Activated CD4-positive, alpha-beta T cell treated with anti-CD3 and anti-CD28 coated beads for 36 hours (primary cell): ENCODE measurements at regions of chr6 and their contacts with region 1.

Region 1: GRCh38 chr6:150079604-150080003 is 10.7 kb upstream of the ULBP3 start:
- DNase-seq: peak; percentile 18
- ATAC-seq: peak; percentile 70
- H3K4me3 Mint-ChIP-seq: no peak overlapping the region
- H3K27ac Mint-ChIP-seq: no peak overlapping the region
- H3K4me1 Mint-ChIP-seq: peaks cover 22% of the 10 kb centered on the region
- H3K27me3 Mint-ChIP-seq: peaks cover 22% of the 10 kb centered on the region

Region 2: GRCh38 chr6:150004783-150005717 is 74.6 kb before region 1 on chr6:
- CTCF ChIA-PET with region 1: no interaction called
- POLR2A ChIA-PET with region 1: no interaction called
- intact Hi-C with region 1: no loop called
- DNase-seq: peak; percentile 93
- ATAC-seq: peak; percentile 74
- H3K4me3 Mint-ChIP-seq: peak overlapping the region; percentile 75
- H3K27ac Mint-ChIP-seq: no peak overlapping the region
- H3K4me1 Mint-ChIP-seq: peaks cover 59% of the 10 kb centered on the region
- H3K27me3 Mint-ChIP-seq: peaks cover 30% of the 10 kb centered on the region

Region 3: DNA sequence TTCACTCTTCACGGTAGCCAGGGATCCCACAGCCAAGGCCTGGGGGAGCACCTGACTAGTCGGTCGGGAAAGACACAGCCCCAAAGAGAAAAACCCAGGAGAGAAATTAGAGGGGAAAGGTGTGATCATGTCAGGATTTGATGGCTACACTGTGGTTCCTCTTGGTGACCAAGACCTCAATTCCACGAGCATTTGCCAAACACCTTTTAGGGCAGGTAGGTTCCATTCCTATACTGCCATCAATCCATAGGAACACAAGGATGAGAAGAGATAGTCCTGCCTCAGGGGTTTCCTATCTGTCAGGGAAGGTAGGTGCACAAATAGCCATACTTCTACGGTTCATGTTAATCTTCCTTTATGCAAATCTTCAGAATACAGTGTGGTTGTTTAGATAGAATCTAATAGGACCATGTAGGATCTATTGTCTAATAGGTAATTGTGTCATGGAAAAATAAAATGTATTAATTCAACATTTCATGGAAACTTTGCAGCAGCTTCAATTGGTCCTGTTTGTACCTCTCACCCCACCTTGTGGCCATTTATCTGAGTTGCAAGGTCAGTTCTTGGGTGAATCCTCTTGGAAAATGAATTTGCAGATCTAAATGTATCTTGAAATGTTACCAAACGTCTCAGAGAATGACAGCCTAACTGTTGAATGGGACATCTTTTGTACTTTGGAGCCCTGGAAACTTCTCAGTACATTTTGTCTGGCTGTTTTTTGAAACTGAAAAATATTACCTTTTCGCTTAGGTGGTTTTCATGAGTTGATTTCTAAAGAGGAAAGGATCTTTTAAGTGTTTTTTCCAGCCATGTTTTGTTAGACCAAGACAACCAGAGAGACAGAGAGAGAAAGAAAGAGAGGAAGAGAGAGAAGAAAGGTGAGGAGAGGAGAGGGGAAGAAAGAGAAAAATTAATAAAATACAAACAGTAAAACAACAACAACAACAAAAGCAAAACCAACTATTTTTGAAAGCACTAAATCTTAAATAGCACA is 255.5 kb after region 1 on chr6:
- CTCF ChIA-PET with region 1: interaction called, 14 read pairs
- POLR2A ChIA-PET with region 1: no interaction called
- intact Hi-C with region 1: loop called (anchors 1 kb)
- DNase-seq: peak; percentile 61
- ATAC-seq: no peak
- H3K4me3 Mint-ChIP-seq: no peak overlapping the region
- H3K27ac Mint-ChIP-seq: no peak overlapping the region
- H3K4me1 Mint-ChIP-seq: no peaks in the 10 kb centered on the region
- H3K27me3 Mint-ChIP-seq: peaks cover 11% of the 10 kb centered on the region

Region 4: DNA sequence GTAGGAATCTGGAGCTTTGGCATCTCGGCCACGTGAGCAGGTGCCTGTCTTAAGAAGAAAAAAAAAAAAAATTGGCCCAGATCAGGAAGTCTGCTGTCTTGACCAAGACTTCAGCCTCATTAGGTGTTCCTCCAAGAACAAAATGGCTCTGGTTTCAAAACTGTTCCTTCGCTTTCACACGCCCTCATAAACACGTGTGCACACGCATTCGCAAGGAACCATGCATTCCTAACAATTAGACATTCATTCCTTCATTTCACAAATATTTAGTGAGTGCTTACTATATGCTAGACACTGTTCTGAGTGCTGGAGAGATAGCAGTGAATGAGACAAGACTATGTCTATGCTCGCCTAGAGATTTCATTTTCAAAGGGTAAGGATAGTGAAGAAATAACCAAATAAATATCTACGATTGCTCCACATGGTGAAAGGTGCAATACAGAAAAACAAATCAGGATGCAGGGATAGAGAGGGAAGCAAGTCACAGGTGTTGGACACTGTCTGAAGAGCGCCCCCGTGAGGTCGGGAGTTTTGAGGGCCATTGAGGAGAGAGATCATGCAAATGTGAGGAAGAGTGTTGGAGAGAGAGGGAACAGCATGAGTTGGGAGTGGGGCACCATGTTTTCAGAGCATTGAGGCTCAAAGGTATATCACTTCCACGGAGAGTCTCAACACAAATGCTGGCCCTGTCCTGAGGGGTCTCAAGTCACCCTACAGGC is 1467.5 kb after region 1 on chr6:
- CTCF ChIA-PET with region 1: no interaction called
- POLR2A ChIA-PET with region 1: no interaction called
- intact Hi-C with region 1: no loop called
- DNase-seq: no peak
- ATAC-seq: no peak
- H3K4me3 Mint-ChIP-seq: no peak overlapping the region
- H3K27ac Mint-ChIP-seq: no peak overlapping the region
- H3K4me1 Mint-ChIP-seq: no peaks in the 10 kb centered on the region
- H3K27me3 Mint-ChIP-seq: peaks cover 4% of the 10 kb centered on the region